ENCODE measurements at regions of chr17 and their contacts with region 1.

Region 1: DNA sequence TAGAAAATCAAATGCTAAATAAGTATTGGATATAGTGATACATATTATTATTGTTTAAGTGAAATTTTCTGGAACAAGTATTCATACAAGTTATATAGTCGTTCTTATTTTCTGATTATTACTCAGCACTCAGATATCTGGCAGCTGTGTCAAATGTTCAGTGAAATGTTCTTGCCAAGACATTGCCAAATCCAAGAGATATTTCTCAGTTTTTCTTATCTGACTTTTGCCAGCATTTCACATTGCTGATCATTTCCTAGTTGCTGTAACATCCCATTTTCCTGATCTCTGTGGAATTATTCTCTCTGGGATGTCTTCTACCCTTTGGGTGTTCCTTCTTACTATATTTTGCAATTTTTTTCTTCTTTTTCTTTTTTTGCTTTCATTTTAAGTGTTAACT is 262.3 kb downstream of the KIF2B start:
- DNase-seq: no peak
- ATAC-seq: no peak
- H3K4me3 ChIP-seq: no peak overlapping the region
- H3K4me3 Mint-ChIP-seq: no peak overlapping the region
- H3K27ac ChIP-seq: no peak overlapping the region
- H3K27ac Mint-ChIP-seq: no peak overlapping the region
- H3K4me1 ChIP-seq: no peaks in the 10 kb centered on the region
- H3K4me1 Mint-ChIP-seq: peaks cover 0 to 2% (median 0%) of the 10 kb centered on the region in 7 donors
- H3K27me3 ChIP-seq: no peaks in the 10 kb centered on the region
- H3K27me3 Mint-ChIP-seq: no peaks in the 10 kb centered on the region

Region 2: DNA sequence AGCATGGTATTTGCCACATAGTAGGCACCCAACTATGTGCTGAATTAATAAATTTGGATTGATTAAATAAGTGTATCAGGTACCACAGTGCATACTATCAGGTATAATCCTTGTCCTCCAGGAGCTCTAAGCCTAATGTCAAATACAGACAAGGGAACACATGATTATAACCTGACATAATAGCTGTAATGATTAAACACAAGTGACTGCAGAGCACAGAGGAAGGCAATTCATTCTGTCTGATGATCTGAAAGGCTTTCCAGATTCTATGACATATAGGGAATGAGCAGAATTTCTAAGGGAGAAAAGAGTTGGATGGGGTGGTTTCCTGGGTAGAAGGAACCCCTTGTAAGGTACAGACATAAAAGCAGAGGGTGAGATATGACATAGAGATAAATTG is 11.2 kb after region 1 on chr17:
- CTCF ChIA-PET with region 1: no interaction called
- POLR2A ChIA-PET with region 1: no interaction called
- intact Hi-C with region 1: loop called in 1 of 2 experiments (anchors 1 kb)
- DNase-seq: no peak
- ATAC-seq: no peak
- H3K4me3 ChIP-seq: no peak overlapping the region
- H3K4me3 Mint-ChIP-seq: no peak overlapping the region
- H3K27ac ChIP-seq: no peak overlapping the region
- H3K27ac Mint-ChIP-seq: no peak overlapping the region
- H3K4me1 ChIP-seq: no peaks in the 10 kb centered on the region
- H3K4me1 Mint-ChIP-seq: no peaks in the 10 kb centered on the region
- H3K27me3 ChIP-seq: no peaks in the 10 kb centered on the region
- H3K27me3 Mint-ChIP-seq: no peaks in the 10 kb centered on the region

Measured in naive thymus-derived CD4-positive, alpha-beta T cell (primary cell).